Sciatic nerve (tissue), 2 donors: ENCODE measurements at regions of chr5 and their contacts with region 1.

Region 1: DNA sequence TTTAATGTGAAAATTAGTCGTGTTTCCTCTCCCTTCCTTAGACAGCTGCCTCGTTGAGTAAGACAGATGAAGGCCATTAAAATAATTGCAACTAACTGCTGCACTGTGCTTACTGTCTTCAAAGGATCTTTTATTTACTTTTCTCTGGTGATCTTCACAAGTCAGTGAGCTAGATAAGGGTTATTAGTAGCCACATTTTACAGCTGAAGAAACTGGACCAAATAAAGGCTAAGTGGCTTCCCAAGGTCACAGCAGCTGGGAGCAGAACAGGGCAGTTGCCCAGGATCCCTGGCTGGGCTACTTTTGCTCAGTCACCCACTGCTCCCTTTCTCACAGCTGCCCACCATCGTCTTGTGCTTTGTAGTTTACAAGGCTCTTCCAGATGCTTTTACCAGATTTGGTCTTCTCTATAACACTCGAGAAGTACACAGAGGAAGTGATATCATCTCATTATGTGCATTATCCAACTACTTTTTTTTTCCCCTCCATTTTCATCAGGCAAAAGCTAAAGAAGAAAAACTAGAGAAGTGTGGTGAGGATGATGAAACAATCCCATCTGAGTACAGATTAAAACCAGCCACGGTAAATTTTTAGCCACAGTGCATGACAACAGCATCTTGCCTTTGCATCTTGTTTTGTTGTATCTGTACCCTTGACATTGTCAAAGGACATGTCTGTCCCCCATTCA is 61.8 kb downstream of the ERAP1 start:
- DNase-seq: no peak
- ATAC-seq: peak; percentile 9

Region 2: DNA sequence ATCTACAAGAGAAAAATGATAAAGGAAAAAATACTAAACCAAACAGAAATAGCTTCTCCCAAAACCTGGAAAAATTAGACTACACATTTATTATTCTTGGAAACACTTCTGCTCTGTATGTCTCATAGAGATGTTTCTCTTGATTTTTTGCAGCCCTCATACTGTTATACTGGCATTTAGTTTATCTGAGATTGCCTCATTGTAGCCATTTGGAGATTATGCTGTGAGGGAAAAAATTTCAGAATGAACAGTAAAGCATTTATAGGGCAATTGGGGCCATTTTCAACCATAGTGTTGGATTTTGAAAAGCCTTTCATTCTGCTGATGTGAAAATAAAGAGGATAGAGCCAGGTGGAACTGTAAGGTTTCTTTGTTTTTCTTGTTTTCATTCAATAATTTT is 878.9 kb after region 1 on chr5:
- intact Hi-C with region 1: loop called (anchors 5 kb)
- DNase-seq: no peak
- ATAC-seq: no peak